K562 (cell line): ENCODE measurements at regions of chr18 and their contacts with region 1.

Region 1: DNA sequence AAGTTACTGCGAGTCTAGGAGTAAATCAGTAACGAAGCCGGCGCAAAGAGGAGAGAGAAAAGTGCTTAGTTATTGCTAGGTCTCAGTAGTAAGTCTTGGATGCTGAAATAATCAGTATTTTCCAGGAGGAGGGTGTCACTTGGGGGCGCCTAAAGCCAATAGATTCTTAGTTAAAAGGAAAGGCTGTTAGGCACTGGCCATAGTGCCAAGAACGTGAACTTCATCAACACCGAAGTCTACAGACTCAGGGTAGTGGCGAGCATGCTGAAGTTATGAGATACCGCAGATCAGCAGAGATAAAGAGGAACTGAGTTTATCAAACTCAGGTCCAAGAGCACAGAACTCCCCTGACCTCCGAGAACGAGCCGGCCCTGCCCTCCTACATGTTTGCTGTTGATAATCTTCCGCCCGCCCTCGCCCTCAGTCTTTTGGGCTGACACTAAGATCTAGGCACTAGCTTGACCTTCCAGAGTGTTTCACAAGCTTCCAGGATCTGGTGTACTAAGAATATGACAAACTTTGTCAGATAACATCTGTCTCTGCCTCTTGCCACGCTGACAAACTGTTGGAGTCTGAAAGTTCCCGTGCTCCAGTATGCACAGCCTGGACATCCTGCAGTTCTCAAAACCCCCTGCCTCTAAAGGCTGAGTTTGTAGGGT is 49.2 kb downstream of the CYB5A start:
- DNase-seq: peak; percentile 34 to 85 (median 54)
- ATAC-seq: peak; percentile 92
- H3K4me3 ChIP-seq: no peak overlapping the region
- H3K27ac ChIP-seq: peak overlapping the region; percentile 45; the same call in 2 of the 3 replicates
- H3K4me1 ChIP-seq: peaks cover 13 to 25% of the 10 kb centered on the region in 2 experiments; a peak in 3 of 5 replicates
- H3K27me3 ChIP-seq: no peaks in the 10 kb centered on the region
- CTCF ChIP-seq: peak in 2 of 3 experiments; percentile 38 to 57; a peak in 2 of 6 replicates
- EP300 ChIP-seq: peak; percentile 70; the same call in 1 of the 2 replicates
- POLR2A ChIP-seq: no peak
- RAD21 ChIP-seq: peak; percentile 63 to 78

Region 2: GRCh38 chr18:74196220-74197119 is 46.1 kb before region 1 on chr18:
- CTCF ChIA-PET with region 1: no interaction called
- POLR2A ChIA-PET with region 1: no interaction called
- in situ Hi-C with region 1: no loop called
- intact Hi-C with region 1: loop called (anchors 1 kb)
- DNase-seq: peak; percentile 65 to 70 (median 68)
- ATAC-seq: peak; percentile 91
- H3K4me3 ChIP-seq: no peak overlapping the region
- H3K27ac ChIP-seq: no peak overlapping the region
- H3K4me1 ChIP-seq: no peaks in the 10 kb centered on the region; a peak in 2 of 5 replicates
- H3K27me3 ChIP-seq: peaks cover 0 to 11% of the 10 kb centered on the region in 2 experiments; a peak in 2 of 5 replicates
- CTCF ChIP-seq: peak; percentile 68 to 76 (median 72)
- EP300 ChIP-seq: no peak
- POLR2A ChIP-seq: no peak
- RAD21 ChIP-seq: peak; percentile 75 to 85